ENCODE measurements at regions of chr18 and their contacts with region 1.

Region 1: GRCh38 chr18:55415258-55415871 is 172.6 kb downstream of the TCF4 start:
- DNase-seq: peak; percentile 69 to 92 (median 82)
- ATAC-seq: peak; percentile 78
- H3K4me3 ChIP-seq: no peak overlapping the region
- H3K4me1 ChIP-seq: no peaks in the 10 kb centered on the region
- CTCF ChIP-seq: peak; percentile 68

Region 2: GRCh38 chr18:55781481-55781957 is 366.2 kb after region 1 on chr18:
- intact Hi-C with region 1: loop called (anchors 10 kb)
- DNase-seq: peak in 1 of 3 donors; percentile 25
- ATAC-seq: no peak
- H3K4me3 ChIP-seq: no peak overlapping the region
- H3K4me1 ChIP-seq: no peaks in the 10 kb centered on the region
- CTCF ChIP-seq: no peak

Region 3: DNA sequence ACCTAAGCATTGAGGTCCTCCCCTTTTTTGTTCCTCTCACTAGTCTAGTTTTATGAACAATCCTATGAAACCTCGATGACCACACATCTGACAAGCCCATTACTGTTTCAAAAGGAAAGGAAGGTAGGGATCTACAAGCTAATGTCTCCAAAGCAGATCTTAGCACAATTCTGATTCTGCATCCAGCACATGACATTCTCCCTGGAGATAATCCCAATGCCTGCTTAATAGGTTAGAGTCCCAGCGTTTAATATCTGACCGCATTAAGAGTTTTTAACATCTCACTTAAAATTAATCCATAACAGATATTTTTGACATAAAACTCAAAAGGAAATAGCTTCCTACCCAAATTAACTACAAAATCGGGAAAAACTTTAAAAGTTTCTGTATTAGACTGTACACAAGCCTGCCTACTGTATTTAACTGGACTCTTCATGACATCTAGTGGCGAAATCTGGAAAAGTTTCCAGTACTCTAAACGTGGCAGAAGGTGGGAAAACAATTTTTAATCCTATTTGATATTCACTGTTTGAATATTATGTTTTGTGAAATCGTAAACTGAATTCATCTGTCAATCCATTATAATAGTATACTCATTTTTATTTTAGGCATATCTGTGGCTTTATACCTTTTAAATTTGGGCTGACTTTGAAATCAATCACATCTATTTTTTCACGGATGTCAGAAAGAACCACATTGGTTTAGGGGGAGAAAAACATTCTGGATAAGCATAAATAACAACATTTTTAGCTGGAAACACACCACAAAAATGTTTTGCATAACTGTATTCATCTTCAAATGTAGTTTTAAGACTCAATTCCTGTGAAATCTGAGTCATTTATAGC is 1160.7 kb after region 1 on chr18:
- intact Hi-C with region 1: loop called (anchors 5 to 10 kb)
- DNase-seq: peak in 1 of 3 donors; percentile 49
- ATAC-seq: peak; percentile 42
- H3K4me3 ChIP-seq: no peak overlapping the region
- H3K4me1 ChIP-seq: no peaks in the 10 kb centered on the region
- CTCF ChIP-seq: no peak

Measured in mucosa of descending colon (tissue), 3 donors.